Common myeloid progenitor, CD34-positive (primary cell): ENCODE measurements at regions of chr22 and their contacts with region 1.

Region 1: DNA sequence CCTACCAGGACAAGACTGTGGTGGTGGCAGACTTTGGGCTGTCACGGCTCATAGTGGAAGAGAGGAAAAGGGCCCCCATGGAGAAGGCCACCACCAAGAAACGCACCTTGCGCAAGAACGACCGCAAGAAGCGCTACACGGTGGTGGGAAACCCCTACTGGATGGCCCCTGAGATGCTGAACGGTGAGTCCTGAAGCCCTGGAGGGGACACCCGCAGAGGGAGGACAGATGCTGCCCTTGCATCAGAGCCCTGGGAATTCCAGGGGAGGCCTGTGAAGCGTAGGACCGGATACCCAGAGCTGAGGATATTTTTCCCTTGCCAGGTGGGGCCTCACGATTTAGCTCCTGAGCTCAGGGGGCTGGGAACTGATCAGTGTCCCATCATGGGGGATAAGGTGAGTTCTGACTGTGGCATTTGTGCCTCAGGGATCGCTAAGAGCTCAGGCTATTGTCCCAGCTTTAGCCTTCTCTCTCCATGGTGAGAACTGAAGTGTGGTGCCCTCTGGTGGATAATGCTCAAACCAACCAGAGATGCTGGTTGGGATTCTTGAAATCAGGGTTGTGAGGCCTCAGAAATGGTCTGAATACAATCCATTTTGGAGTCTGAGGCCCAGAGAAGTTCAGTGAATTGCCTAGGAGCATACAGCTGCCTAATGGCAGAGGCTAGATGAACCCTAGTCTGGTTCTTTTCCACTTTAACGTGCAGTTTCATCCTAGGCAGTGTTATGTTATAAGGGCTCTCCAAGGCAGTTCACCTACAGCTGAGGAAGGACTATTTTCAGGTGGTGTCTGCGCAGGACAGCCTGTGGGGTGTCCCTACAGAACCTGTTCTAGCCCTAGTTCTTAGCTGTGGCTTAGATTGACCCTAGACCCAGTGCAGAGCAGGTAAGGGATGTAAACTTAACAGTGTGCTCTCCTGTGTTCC is 19.5 kb downstream of the PIK3IP1 start:
- DNase-seq: peak; percentile 51 to 73 (median 64)
- H3K4me3 ChIP-seq: no peak overlapping the region
- H3K27ac ChIP-seq: no peak overlapping the region
- H3K4me1 ChIP-seq: peaks cover 0 to 5% (median 5%) of the 10 kb centered on the region in 4 experiments
- H3K27me3 ChIP-seq: no peaks in the 10 kb centered on the region

Region 2: DNA sequence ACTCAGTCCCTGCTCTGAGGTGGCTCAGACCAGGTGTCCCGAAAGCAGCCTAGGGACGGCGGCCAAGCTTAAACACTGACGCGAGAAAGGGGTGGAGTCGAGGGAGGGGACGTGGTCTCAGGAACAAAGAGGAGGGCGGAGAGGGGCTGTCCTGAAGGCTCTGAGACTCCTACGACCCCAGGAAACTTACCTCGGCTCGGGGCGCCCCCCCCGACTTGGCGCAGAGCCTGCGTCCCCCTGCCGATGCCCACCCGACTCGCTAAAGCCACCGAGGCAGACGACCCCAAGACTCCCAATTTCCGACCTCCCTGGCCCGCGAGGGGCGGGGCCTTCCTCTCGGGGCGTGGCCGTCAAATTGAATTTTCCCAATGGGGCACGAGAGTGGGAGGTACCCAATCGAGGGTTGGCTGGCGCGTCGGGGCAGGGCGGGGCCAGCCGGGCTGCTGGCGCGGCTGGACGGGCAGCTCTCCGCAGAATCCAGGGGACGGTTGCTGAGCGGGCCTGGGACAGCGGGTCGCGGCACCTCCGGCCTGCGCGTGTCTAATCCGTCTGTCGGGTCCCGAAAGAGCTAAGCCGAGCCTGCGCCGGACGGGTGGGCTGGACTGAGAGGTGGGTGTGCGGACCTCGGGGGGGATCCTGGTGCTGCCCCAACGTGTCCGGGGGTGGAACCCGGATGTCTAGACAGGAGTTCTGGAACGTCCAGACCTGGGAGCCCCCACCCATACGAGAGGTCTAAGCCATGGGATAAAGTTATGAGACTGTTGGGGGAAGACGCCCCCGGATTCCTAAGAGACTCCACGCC is 191.7 kb before region 1 on chr22 and contains the start of gene SMTN:
- CTCF ChIA-PET with region 1: no interaction called
- POLR2A ChIA-PET with region 1: no interaction called
- DNase-seq: peak; percentile 87 to 91 (median 89)
- H3K4me3 ChIP-seq: peak within 1 kb of the TSS; percentile 67 to 88 (median 86)
- H3K27ac ChIP-seq: peak within 1 kb of the TSS; percentile 72 to 79
- H3K4me1 ChIP-seq: peaks cover 2 to 49% (median 45%) of the 10 kb centered on the region in 4 experiments
- H3K27me3 ChIP-seq: no peaks in the 10 kb centered on the region

Region 3: GRCh38 chr22:31211862-31212730 is 60.7 kb before region 1 on chr22 and contains the start of gene LIMK2:
- CTCF ChIA-PET with region 1: interaction called, 25 read pairs
- POLR2A ChIA-PET with region 1: interaction called, 5 read pairs
- DNase-seq: peak; percentile 90 to 93 (median 93)
- H3K4me3 ChIP-seq: peak within 1 kb of the TSS; percentile 77 to 96 (median 94)
- H3K27ac ChIP-seq: peak within 1 kb of the TSS; percentile 55 to 79
- H3K4me1 ChIP-seq: peaks cover 19 to 52% (median 41%) of the 10 kb centered on the region in 4 experiments
- H3K27me3 ChIP-seq: no peaks in the 10 kb centered on the region

Region 4: DNA sequence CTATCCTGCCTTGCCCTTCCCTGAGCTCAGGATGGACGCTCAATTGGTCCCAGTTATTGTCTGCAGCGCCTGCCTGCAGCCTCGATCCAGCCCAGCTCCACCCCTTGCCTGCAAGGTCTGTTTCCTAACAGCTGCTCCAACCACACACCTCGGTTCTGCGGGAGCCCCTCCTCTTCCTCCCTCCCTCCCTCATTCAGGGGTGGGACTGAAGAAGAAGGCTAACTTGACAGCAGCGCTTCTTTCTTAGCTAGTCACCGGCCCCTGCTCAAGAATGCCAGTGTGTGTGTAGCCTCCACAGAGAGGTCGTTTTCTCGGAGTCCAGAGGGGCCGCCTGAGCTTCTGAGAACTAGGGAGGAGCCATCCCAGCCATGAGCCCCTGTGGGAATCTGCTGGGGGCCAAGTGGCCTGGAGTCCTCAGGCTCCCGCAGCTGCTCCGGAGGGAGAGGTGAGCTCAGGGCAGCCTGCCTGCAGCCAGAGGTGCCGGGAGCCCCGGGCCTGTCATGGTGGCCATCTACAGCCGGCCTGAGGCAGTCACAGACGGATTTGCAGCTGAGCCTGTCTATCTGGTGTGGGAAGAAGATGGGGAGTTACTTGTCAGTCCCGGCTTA is 24.5 kb before region 1 on chr22:
- CTCF ChIA-PET with region 1: interaction called, 185 read pairs
- POLR2A ChIA-PET with region 1: no interaction called
- DNase-seq: peak; percentile 72 to 90 (median 86)
- H3K4me3 ChIP-seq: peak overlapping the region in 4 of 7 experiments; percentile 12 to 64 (median 42)
- H3K27ac ChIP-seq: no peak overlapping the region
- H3K4me1 ChIP-seq: peaks cover 0 to 28% (median 18%) of the 10 kb centered on the region in 4 experiments
- H3K27me3 ChIP-seq: no peaks in the 10 kb centered on the region

Region 5: GRCh38 chr22:31290494-31291471 is 18.0 kb after region 1 on chr22:
- CTCF ChIA-PET with region 1: interaction called, 38 read pairs
- POLR2A ChIA-PET with region 1: no interaction called
- DNase-seq: peak; percentile 81 to 94 (median 91)
- H3K4me3 ChIP-seq: peak overlapping the region; percentile 75 to 97 (median 91)
- H3K27ac ChIP-seq: peak overlapping the region; percentile 61 to 84
- H3K4me1 ChIP-seq: peaks cover 12 to 93% (median 70%) of the 10 kb centered on the region in 4 experiments
- H3K27me3 ChIP-seq: no peaks in the 10 kb centered on the region